HepG2 (cell line): ENCODE measurements at regions of chr17 and their contacts with region 1.

Region 1: GRCh38 chr17:31487648-31488263 is 96.3 kb downstream of the RAB11FIP4 start:
- DNase-seq: peak; percentile 86
- ATAC-seq: peak; percentile 90
- H3K4me3 ChIP-seq: peak overlapping the region; percentile 81 to 95 (median 87)
- H3K27ac ChIP-seq: peak overlapping the region; percentile 73
- H3K4me1 ChIP-seq: peaks cover 53% of the 10 kb centered on the region
- H3K27me3 ChIP-seq: no peaks in the 10 kb centered on the region
- CTCF ChIP-seq: peak; percentile 50
- EP300 ChIP-seq: 0 out of 4 replicates have a peak, but pooled peaks of 1 of the 2 experiments have one; percentile 3
- POLR2A ChIP-seq: peak; percentile 91 to 98
- RAD21 ChIP-seq: peak; percentile 68

Region 2: GRCh38 chr17:31499771-31500554 is 12.2 kb after region 1 on chr17:
- CTCF ChIA-PET with region 1: no interaction called
- POLR2A ChIA-PET with region 1: interaction called, 115 read pairs
- in situ Hi-C with region 1: no loop called
- intact Hi-C with region 1: loop called (anchors 1 kb)
- DNase-seq: peak; percentile 91
- ATAC-seq: peak; percentile 64
- H3K4me3 ChIP-seq: peak overlapping the region; percentile 32 to 53 (median 41); a peak in 5 of 6 replicates
- H3K27ac ChIP-seq: peak overlapping the region; percentile 87
- H3K4me1 ChIP-seq: peaks cover 84% of the 10 kb centered on the region
- H3K27me3 ChIP-seq: no peaks in the 10 kb centered on the region
- CTCF ChIP-seq: no peak
- EP300 ChIP-seq: peak; percentile 55 to 84; a peak in 3 of 4 replicates
- POLR2A ChIP-seq: peak in 1 of 2 experiments; percentile 29; a peak in 2 of 4 replicates
- RAD21 ChIP-seq: no peak

Region 3: GRCh38 chr17:31517524-31517923 is 29.8 kb after region 1 on chr17:
- CTCF ChIA-PET with region 1: no interaction called
- POLR2A ChIA-PET with region 1: interaction called, 8 read pairs
- in situ Hi-C with region 1: no loop called
- intact Hi-C with region 1: loop called (anchors 1 kb)
- DNase-seq: peak; percentile 53
- ATAC-seq: peak; percentile 63
- H3K4me3 ChIP-seq: no peak overlapping the region
- H3K27ac ChIP-seq: no peak overlapping the region
- H3K4me1 ChIP-seq: peaks cover 33% of the 10 kb centered on the region
- H3K27me3 ChIP-seq: no peaks in the 10 kb centered on the region
- CTCF ChIP-seq: peak; percentile 76
- EP300 ChIP-seq: no peak
- POLR2A ChIP-seq: no peak
- RAD21 ChIP-seq: peak; percentile 82